ENCODE measurements at regions of chr10 and their contacts with region 1.

Region 1: GRCh38 chr10:61896854-61897661 is 4.4 kb upstream of the ARID5B start:
- DNase-seq: peak; percentile 43
- ATAC-seq: peak; percentile 71
- H3K4me3 Mint-ChIP-seq: peak overlapping the region; percentile 97
- H3K27ac Mint-ChIP-seq: peak overlapping the region; percentile 98
- H3K4me1 Mint-ChIP-seq: peaks cover 37% of the 10 kb centered on the region
- H3K27me3 Mint-ChIP-seq: no peaks in the 10 kb centered on the region
- CTCF ChIP-seq: no peak

Region 2: GRCh38 chr10:61869774-61870525 is 27.1 kb before region 1 on chr10:
- CTCF ChIA-PET with region 1: interaction called, 7 read pairs
- POLR2A ChIA-PET with region 1: interaction called, 18 read pairs
- intact Hi-C with region 1: no loop called
- DNase-seq: no peak
- ATAC-seq: no peak
- H3K4me3 Mint-ChIP-seq: no peak overlapping the region
- H3K27ac Mint-ChIP-seq: no peak overlapping the region
- H3K4me1 Mint-ChIP-seq: peaks cover 2% of the 10 kb centered on the region
- H3K27me3 Mint-ChIP-seq: no peaks in the 10 kb centered on the region
- CTCF ChIP-seq: no peak

Region 3: GRCh38 chr10:62166331-62167131 is 269.5 kb after region 1 on chr10:
- CTCF ChIA-PET with region 1: no interaction called
- POLR2A ChIA-PET with region 1: interaction called, 3 read pairs
- intact Hi-C with region 1: loop called (anchors 2 kb)
- DNase-seq: no peak
- ATAC-seq: peak; percentile 96
- H3K4me3 Mint-ChIP-seq: peak overlapping the region; percentile 16
- H3K27ac Mint-ChIP-seq: peak overlapping the region; percentile 80
- H3K4me1 Mint-ChIP-seq: peaks cover 38% of the 10 kb centered on the region
- H3K27me3 Mint-ChIP-seq: no peaks in the 10 kb centered on the region
- CTCF ChIP-seq: no peak

Region 4: DNA sequence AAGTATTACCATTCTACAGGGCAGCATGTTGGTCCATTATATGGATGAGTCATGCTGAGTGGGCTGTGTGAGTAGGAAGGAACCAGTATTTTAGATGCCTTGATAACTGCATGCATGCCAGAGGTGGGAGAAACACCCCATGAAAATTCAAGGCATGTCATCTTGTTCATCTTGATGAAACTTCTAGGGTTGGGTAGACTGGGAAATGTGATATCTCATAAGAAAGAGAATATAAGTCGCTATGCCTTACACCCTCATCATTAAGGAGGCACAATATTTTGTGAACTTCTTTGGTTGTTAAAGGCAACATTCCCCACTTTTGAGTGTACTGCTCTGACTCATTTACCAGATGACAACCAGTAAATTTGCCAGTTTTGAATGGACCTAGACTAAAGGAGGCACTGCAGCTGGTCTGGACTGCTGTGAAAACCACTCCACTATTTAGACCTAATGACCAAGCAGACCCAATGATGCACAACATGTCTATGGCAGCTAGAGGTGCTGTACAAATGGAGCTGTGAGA is 525.1 kb after region 1 on chr10:
- CTCF ChIA-PET with region 1: interaction called, 3 read pairs
- POLR2A ChIA-PET with region 1: interaction called, 4 read pairs
- intact Hi-C with region 1: loop called (anchors 5 kb)
- DNase-seq: no peak
- ATAC-seq: no peak
- H3K4me3 Mint-ChIP-seq: no peak overlapping the region
- H3K27ac Mint-ChIP-seq: no peak overlapping the region
- H3K4me1 Mint-ChIP-seq: no peaks in the 10 kb centered on the region
- H3K27me3 Mint-ChIP-seq: peaks cover 13% of the 10 kb centered on the region
- CTCF ChIP-seq: no peak

Measured in activated B cell treated with CpG ODN at 0.5 μM for 24 hours (primary cell).